Heart left ventricle (tissue), 16 donors: ENCODE measurements at regions of chr21 and their contacts with region 1.

Region 1: DNA sequence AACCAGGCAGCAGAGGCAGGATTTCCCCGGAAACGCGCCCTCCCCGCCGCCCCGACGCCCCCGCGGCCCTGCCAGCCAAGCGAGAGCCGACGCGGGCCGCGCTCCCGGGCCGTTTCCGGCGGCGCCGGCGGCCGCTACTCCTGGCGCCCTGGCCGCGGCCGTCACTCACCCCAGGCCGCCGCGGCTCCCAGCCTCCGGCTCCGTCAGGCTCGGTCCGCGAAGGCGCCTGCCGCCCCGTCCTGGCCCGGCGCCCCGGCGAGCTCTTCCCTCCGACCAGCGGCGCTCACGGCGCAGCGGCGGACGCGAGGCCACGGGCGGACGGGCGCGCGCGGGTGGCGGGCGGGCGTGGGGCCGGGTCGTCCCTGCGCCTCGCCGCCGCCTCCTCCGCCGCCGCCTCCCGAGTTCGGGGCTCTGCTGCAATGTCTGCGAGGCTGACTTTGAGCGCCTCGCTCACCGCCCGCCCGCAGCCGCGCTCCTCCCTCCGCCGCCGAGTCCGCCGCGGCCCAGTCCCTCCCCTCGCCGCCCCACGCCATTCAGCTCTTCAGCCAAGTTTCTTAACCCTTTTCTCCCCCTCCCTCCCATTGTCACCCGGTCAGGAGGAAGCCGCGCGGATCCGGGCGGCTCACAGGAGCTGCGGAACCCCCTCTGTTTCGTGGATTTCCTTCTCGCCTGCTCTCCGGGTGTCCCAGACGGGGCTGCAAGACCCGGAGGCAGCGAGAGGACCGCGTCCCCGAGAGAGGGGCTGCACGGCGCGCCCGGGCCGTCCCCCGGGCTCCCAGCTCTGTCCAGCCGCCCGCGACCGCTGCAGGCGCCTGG is at the start of gene NRIP1:
- DNase-seq: peak; percentile 94 to 95 (median 95)
- ATAC-seq: peak; percentile 89 to 97 (median 94)
- H3K4me3 ChIP-seq: peak within 1 kb of the TSS; percentile 76 to 92 (median 87)
- H3K27ac ChIP-seq: peak within 1 kb of the TSS; percentile 88 to 98 (median 96)
- H3K4me1 ChIP-seq: peaks cover 0 to 46% (median 32%) of the 10 kb centered on the region in 12 donors
- H3K27me3 ChIP-seq: no peaks in the 10 kb centered on the region
- CTCF ChIP-seq: no peak
- POLR2A ChIP-seq: peak; percentile 22 to 68
- total RNA-seq, gene NRIP1: 11.0 to 32.0 (median 17.8) TPM

Region 2: DNA sequence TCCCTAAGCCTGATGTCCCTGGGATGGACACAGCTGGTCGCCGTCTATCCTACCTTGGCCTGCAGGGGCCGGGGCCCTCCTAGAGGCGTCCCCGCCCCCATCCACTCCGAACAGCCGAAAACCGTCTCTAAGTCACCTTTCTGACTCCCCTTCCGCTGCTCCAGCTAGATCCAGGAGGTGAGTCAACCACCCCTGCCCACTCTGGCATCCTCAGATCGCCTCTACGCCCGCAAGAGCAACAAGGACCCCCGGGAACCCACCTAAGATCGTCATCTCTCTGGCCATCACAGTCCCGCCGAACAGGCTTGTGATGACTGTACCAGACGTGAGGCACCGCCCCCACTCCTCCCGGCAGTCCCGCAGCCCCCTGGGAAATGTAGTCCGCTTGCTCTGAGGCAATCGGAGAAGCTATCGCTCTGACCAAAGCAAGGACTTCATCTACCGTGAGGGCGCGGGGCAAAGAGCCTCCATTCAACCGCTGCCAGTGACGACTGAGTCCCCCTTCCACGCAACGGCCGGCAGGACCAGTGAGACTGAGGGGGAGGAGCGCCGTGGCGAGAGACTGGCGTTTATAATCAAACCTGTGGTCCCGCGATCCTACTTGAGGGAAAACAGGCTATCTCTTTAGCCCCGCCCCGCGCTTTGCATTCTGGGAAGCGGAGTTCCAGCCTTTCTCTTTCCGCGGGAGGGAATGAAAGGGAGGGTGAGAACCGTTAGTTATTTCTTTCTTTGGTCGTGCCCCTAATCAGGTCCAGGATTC is 681.8 kb before region 1 on chr21 and contains the start of gene HSPA13:
- intact Hi-C with region 1: loop called in 3 of 10 experiments (anchors 5 to 10 kb)
- DNase-seq: peak; percentile 99 to 100 (median 100)
- ATAC-seq: peak; percentile 99 to 100 (median 100)
- H3K4me3 ChIP-seq: peak within 1 kb of the TSS; percentile 55 to 93 (median 81)
- H3K27ac ChIP-seq: peak within 1 kb of the TSS; percentile 68 to 96 (median 90)
- H3K4me1 ChIP-seq: peaks cover 0 to 41% (median 19%) of the 10 kb centered on the region in 12 donors
- H3K27me3 ChIP-seq: no peaks in the 10 kb centered on the region
- CTCF ChIP-seq: no peak
- POLR2A ChIP-seq: peak in 1 of 2 donors; percentile 50
- total RNA-seq, gene HSPA13: 10.2 to 23.7 (median 16.0) TPM

Region 3: DNA sequence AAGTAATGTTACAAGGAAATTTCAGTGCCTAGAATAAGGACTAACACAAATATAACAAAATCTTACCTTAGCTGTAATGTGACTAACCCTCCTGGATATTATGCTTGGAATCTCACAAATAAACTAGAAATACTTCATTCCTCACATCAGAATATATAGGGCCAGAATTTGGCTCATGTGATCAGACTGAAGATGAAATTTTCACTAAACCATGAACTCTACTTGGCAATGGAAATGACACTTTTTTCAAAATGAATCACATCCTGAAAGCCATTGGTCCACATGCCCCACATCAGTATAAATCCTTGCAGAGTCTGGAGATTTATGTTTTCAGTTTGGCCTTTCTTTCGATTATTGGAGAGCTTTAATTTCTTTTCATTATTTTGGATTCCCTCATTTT is 227.8 kb before region 1 on chr21:
- intact Hi-C with region 1: no loop called
- DNase-seq: no peak
- ATAC-seq: no peak
- H3K4me3 ChIP-seq: no peak overlapping the region
- H3K27ac ChIP-seq: no peak overlapping the region
- H3K4me1 ChIP-seq: no peaks in the 10 kb centered on the region
- H3K27me3 ChIP-seq: no peaks in the 10 kb centered on the region
- CTCF ChIP-seq: no peak
- POLR2A ChIP-seq: no peak

Region 4: DNA sequence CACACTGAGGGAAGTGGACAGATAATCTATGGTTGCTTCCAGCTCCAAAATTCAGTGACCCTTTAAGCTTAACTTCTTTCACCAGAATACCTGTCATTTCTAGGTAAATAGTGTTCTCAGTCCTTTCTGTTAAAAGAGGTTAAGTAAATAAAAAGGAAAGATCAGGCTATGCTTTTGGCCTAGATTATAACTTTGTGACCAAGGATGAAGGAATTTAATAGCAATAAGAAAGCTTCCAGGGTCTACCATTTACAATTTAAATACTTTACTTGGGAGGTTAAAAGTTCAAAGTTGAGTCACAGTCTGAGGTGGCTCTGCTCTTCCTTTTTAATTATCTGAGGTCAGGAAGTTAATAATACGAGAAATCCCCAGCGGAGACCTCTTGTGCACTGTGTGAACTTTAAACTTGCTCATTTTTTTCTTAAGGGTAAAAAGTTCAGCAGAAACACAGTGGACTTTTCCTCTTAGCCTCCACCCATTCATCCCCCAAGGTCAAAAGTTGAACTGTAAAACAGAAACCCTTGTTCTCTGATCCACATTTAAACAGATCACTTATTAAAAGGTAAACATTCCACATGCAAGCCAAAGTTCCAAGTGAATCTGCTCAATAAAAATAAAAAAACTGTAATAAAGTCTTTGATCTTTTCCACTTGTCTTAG is 187.1 kb before region 1 on chr21:
- intact Hi-C with region 1: loop called in 1 of 10 experiments (anchors 5 kb)
- DNase-seq: no peak
- ATAC-seq: peak; percentile 55 to 88 (median 79)
- H3K4me3 ChIP-seq: no peak overlapping the region
- H3K27ac ChIP-seq: peak overlapping the region in 3 of 12 donors; percentile 11 to 39 (median 26)
- H3K4me1 ChIP-seq: peaks cover 0 to 42% (median 11%) of the 10 kb centered on the region in 12 donors
- H3K27me3 ChIP-seq: no peaks in the 10 kb centered on the region
- CTCF ChIP-seq: no peak
- POLR2A ChIP-seq: no peak

Region 5: DNA sequence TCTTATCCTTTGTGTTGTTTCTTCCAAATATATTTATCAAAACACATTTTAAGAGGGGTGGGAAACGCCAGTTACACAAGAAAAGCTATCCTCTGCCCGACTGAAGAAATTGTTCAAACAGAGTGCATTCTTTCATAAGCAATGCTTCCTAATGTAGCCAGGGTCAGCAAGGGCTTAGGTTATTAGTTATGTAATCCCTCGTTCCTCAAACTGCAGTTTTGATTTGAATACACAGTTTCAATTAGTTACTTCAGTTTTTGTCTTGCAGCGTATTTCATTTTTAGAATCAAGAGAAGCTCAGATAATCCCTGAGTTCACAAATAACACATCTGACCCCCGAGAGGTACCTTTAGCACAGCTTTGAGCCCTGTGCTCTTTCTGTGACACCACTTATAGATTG is 141.7 kb after region 1 on chr21:
- intact Hi-C with region 1: loop called in 1 of 10 experiments (anchors 10 kb)
- DNase-seq: no peak
- ATAC-seq: no peak
- H3K4me3 ChIP-seq: no peak overlapping the region
- H3K27ac ChIP-seq: peak overlapping the region in 1 of 12 donors; percentile 35
- H3K4me1 ChIP-seq: peaks cover 0 to 47% (median 6%) of the 10 kb centered on the region in 12 donors
- H3K27me3 ChIP-seq: no peaks in the 10 kb centered on the region
- CTCF ChIP-seq: no peak
- POLR2A ChIP-seq: no peak

Region 6: GRCh38 chr21:15483138-15483780 is 418.5 kb after region 1 on chr21:
- intact Hi-C with region 1: loop called in 9 of 10 experiments (anchors 2 to 5 kb)
- DNase-seq: peak; percentile 87 to 91 (median 88)
- ATAC-seq: peak; percentile 92 to 100 (median 98)
- H3K4me3 ChIP-seq: no peak overlapping the region
- H3K27ac ChIP-seq: no peak overlapping the region
- H3K4me1 ChIP-seq: peaks cover 0 to 5% (median 0%) of the 10 kb centered on the region in 12 donors
- H3K27me3 ChIP-seq: no peaks in the 10 kb centered on the region
- CTCF ChIP-seq: peak; percentile 82 to 97 (median 92)
- POLR2A ChIP-seq: no peak